PC-3 (cell line): ENCODE measurements at regions of chr5 and their contacts with region 1.

Region 1: GRCh38 chr5:54743997-54744788 is 226.6 kb downstream of the SNX18 start:
- DNase-seq: peak; percentile 81
- ATAC-seq: peak; percentile 51
- H3K4me3 ChIP-seq: no peak overlapping the region
- H3K27ac ChIP-seq: peak overlapping the region; percentile 75
- H3K4me1 ChIP-seq: peaks cover 49% of the 10 kb centered on the region
- H3K27me3 ChIP-seq: no peaks in the 10 kb centered on the region
- CTCF ChIP-seq: no peak

Region 2: DNA sequence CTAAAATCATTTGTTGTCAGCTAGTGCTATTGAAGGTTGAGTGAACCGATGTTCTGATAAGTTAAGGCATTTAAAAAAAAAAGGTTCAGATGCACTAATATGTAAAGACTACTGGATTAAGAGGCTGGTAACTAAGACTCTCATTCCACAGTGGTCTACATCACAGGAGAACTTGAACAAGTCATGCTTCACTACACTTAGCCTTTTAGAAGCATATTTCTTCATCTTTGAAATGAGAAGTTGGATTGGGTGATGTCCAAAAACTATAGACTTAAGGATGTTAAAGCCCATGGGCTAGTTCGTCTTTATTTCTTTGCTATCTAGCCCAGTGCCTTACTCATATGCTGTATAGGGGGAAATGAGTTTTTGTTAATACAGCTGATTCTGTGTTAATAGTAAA is 1076.6 kb before region 1 on chr5:
- CTCF ChIA-PET with region 1: no interaction called
- POLR2A ChIA-PET with region 1: no interaction called
- intact Hi-C with region 1: no loop called
- DNase-seq: no peak
- ATAC-seq: no peak
- H3K4me3 ChIP-seq: no peak overlapping the region
- H3K27ac ChIP-seq: no peak overlapping the region
- H3K4me1 ChIP-seq: no peaks in the 10 kb centered on the region
- H3K27me3 ChIP-seq: no peaks in the 10 kb centered on the region
- CTCF ChIP-seq: no peak

Region 3: GRCh38 chr5:54440456-54440893 is 303.7 kb before region 1 on chr5:
- CTCF ChIA-PET with region 1: no interaction called
- POLR2A ChIA-PET with region 1: no interaction called
- intact Hi-C with region 1: no loop called
- DNase-seq: no peak
- ATAC-seq: no peak
- H3K4me3 ChIP-seq: no peak overlapping the region
- H3K27ac ChIP-seq: no peak overlapping the region
- H3K4me1 ChIP-seq: no peaks in the 10 kb centered on the region
- H3K27me3 ChIP-seq: peaks cover 24% of the 10 kb centered on the region; the same call in 1 of the 2 replicates
- CTCF ChIP-seq: no peak

Region 4: GRCh38 chr5:54703133-54703532 is 41.1 kb before region 1 on chr5:
- CTCF ChIA-PET with region 1: no interaction called
- POLR2A ChIA-PET with region 1: no interaction called
- intact Hi-C with region 1: loop called (anchors 5 kb)
- DNase-seq: peak; percentile 81
- ATAC-seq: peak; percentile 65
- H3K4me3 ChIP-seq: no peak overlapping the region
- H3K27ac ChIP-seq: peak overlapping the region; percentile 58
- H3K4me1 ChIP-seq: peaks cover 42% of the 10 kb centered on the region
- H3K27me3 ChIP-seq: no peaks in the 10 kb centered on the region
- CTCF ChIP-seq: no peak

Region 5: DNA sequence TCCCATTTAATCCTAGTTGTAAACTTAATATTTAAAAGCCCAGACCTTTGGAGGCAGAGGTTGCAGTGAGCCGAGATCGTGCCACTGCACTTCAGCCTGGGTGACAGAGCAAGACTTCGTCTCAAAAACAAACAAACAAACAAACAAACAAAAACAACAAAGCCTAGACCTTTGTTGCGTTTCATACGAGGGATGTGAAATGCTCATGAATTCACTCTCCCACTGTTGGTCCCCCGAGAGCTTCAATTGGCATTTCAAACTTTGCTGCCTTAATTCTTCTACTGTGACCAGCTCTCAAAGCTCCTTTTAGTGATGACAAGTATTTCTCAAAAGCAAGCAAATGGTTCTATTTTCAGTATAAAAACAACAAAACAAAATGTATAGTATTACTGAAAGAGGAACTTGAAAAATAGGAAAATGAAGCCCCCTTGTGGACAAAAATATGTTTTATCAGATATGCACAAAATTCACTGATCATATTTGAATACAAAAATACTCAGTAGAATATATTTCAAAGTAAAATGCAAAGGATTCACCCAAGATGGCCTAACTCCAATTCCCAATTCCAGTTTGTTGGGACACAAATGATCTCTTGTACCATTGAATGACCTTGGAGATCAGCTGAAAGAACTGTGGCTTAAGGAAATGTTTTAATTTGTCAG is 100.8 kb after region 1 on chr5:
- CTCF ChIA-PET with region 1: interaction called, 3 read pairs
- POLR2A ChIA-PET with region 1: no interaction called
- intact Hi-C with region 1: loop called (anchors 10 kb)
- DNase-seq: peak; percentile 62
- ATAC-seq: peak; percentile 50
- H3K4me3 ChIP-seq: peak overlapping the region; percentile 44; the same call in 1 of the 2 replicates
- H3K27ac ChIP-seq: no peak overlapping the region
- H3K4me1 ChIP-seq: no peaks in the 10 kb centered on the region
- H3K27me3 ChIP-seq: no peaks in the 10 kb centered on the region
- CTCF ChIP-seq: peak; percentile 67